ENCODE measurements at regions of chr5 and their contacts with region 1.

Region 1: DNA sequence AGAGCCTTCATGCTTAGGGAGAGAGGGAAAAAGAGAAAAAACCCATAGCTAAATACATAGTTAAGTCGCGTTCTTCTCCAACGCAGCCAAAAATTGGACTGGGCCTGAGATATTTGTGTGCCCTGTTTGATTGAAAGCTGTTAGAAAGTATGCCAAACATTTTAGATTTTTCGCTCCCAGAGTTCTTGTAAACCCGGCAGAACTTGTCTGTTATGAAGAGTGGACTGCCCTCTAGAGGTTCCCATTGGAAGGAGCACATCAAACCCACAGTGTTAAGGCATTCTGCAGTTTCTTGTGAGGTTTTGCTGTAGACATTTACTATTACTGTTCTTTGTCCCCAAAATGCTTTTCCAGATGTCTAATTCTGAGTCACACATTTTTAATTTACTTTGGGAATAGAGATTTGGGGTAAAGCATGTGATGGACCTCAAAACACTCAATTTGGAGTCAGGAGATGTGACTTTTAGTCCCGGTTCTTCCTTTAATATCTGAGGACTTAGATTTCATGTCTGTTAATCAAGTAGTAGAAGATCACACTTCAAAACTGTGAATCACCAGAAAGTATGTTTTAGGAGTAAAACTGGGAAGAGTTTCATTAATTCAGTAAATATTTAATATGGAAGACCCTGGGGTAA is 96.6 kb downstream of the PCSK1 start:
- DNase-seq: peak; percentile 84
- ATAC-seq: peak; percentile 90
- H3K4me3 ChIP-seq: peak overlapping the region in 1 of 3 experiments; percentile 28; a peak in 1 of 6 replicates
- H3K27ac ChIP-seq: peak overlapping the region; percentile 25
- H3K4me1 ChIP-seq: peaks cover 71% of the 10 kb centered on the region
- H3K27me3 ChIP-seq: no peaks in the 10 kb centered on the region
- CTCF ChIP-seq: peak; percentile 87
- EP300 ChIP-seq: peak in 1 of 2 experiments; percentile 50; a peak in 2 of 4 replicates
- POLR2A ChIP-seq: no peak
- RAD21 ChIP-seq: peak; percentile 85

Region 2: GRCh38 chr5:95646554-95647431 is 689.7 kb before region 1 on chr5 and contains the start of gene RFESD:
- CTCF ChIA-PET with region 1: no interaction called
- POLR2A ChIA-PET with region 1: no interaction called
- in situ Hi-C with region 1: loop called (anchors 25 kb)
- intact Hi-C with region 1: no loop called
- DNase-seq: peak; percentile 96
- ATAC-seq: peak; percentile 98
- H3K4me3 ChIP-seq: peak within 1 kb of the TSS; percentile 31 to 55 (median 39); a peak in 5 of 6 replicates
- H3K27ac ChIP-seq: peak within 1 kb of the TSS; percentile 90
- H3K4me1 ChIP-seq: peaks cover 55% of the 10 kb centered on the region
- H3K27me3 ChIP-seq: no peaks in the 10 kb centered on the region
- CTCF ChIP-seq: peak; percentile 56
- EP300 ChIP-seq: peak; percentile 18 to 53; a peak in 2 of 4 replicates
- POLR2A ChIP-seq: peak; percentile 65 to 85
- RAD21 ChIP-seq: peak; percentile 32; the same call in 1 of the 2 replicates
- total RNA-seq, gene RFESD: 1.2 and 2.2 TPM in 2 replicates

Region 3: GRCh38 chr5:95892780-95893354 is 443.6 kb before region 1 on chr5:
- CTCF ChIA-PET with region 1: interaction called, 3 read pairs
- POLR2A ChIA-PET with region 1: no interaction called
- in situ Hi-C with region 1: no loop called
- intact Hi-C with region 1: loop called (anchors 10 kb)
- DNase-seq: peak; percentile 48
- ATAC-seq: peak; percentile 76
- H3K4me3 ChIP-seq: no peak overlapping the region
- H3K27ac ChIP-seq: no peak overlapping the region
- H3K4me1 ChIP-seq: peaks cover 53% of the 10 kb centered on the region
- H3K27me3 ChIP-seq: no peaks in the 10 kb centered on the region
- CTCF ChIP-seq: peak; percentile 59
- EP300 ChIP-seq: no peak
- POLR2A ChIP-seq: no peak
- RAD21 ChIP-seq: peak; percentile 72

Region 4: GRCh38 chr5:96001262-96001661 is 335.2 kb before region 1 on chr5:
- CTCF ChIA-PET with region 1: no interaction called
- POLR2A ChIA-PET with region 1: no interaction called
- in situ Hi-C with region 1: no loop called
- intact Hi-C with region 1: loop called (anchors 1 kb)
- DNase-seq: peak; percentile 85
- ATAC-seq: peak; percentile 94
- H3K4me3 ChIP-seq: no peak overlapping the region
- H3K27ac ChIP-seq: peak overlapping the region; percentile 54
- H3K4me1 ChIP-seq: peaks cover 61% of the 10 kb centered on the region
- H3K27me3 ChIP-seq: no peaks in the 10 kb centered on the region
- CTCF ChIP-seq: no peak
- EP300 ChIP-seq: peak in 1 of 2 experiments; percentile 84; a peak in 2 of 4 replicates
- POLR2A ChIP-seq: no peak
- RAD21 ChIP-seq: no peak

Region 5: DNA sequence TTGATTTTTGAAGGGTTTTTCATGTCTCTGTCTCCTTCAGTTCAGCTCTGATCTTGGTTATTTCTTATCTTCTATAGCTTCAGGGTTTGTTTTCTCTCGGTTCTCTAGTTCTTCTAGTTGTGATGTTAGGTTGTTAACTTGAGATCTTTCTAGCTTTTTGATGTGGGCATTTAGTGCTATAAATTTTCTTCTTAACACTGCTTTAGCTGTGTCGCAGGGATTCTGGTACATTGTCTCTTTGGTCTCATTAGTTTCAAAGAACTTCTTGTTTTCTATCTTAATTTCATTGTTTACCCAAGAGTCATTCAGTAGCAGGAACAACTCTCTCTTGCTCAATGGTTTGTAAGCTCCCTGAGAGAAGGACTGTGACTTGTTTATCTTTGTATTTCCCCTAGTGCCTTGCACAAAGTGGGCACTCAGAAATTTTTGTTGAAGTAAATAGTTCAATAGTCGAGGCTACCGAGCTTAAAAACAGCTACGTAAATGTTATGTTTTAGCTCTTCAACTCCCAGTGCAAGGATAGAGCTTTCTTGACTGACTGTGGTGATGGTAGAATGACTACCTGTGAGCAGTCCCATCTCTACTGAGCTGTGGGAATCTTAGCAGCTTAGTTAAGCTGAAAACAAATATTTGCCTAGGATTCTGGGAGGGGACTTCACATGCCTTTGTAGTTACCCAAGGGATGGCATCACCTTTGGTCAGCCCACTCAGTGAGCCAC is 149.0 kb before region 1 on chr5:
- CTCF ChIA-PET with region 1: no interaction called
- POLR2A ChIA-PET with region 1: interaction called, 3 read pairs
- in situ Hi-C with region 1: no loop called
- intact Hi-C with region 1: loop called (anchors 5 kb)
- DNase-seq: peak; percentile 93
- ATAC-seq: peak; percentile 98
- H3K4me3 ChIP-seq: no peak overlapping the region; a peak in 1 of 6 replicates
- H3K27ac ChIP-seq: peak overlapping the region; percentile 61
- H3K4me1 ChIP-seq: peaks cover 47% of the 10 kb centered on the region
- H3K27me3 ChIP-seq: no peaks in the 10 kb centered on the region
- CTCF ChIP-seq: no peak
- EP300 ChIP-seq: peak; percentile 13 to 81; a peak in 2 of 4 replicates
- POLR2A ChIP-seq: no peak
- RAD21 ChIP-seq: no peak; the same call in 1 of the 2 replicates

Region 6: DNA sequence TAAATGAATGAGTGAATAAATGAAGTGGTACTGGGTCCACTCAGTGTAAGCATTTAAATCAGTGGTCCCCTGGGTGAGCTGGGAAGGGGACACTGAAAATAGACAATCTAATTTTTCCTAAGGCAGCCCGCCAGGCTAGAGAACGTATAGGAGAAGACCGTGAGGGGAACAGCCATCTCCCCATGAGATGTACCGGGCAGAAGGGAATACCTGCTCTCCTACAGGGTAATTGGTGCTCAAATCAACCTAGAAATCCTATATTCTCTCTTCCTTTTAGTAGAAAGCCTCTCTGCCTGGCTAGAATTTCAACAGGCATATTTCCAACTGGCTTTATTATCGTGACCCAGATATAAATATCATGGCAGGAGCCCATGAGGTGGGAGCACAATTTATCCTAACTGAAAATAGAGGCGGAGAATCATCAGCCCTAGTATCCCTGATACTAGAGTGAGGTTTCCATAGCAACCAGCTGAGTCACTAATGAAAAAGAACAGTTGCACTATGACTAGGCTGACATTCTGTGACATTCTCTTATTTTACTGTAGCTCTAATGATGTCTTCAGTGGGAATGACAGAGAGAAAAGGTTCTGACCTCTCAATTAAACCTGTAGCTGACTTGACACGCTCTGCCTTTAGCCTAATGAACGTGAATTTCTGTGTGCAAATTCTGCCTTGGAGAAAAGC is 229.3 kb after region 1 on chr5:
- CTCF ChIA-PET with region 1: no interaction called
- POLR2A ChIA-PET with region 1: no interaction called
- in situ Hi-C with region 1: no loop called
- intact Hi-C with region 1: no loop called
- DNase-seq: no peak
- ATAC-seq: no peak
- H3K4me3 ChIP-seq: no peak overlapping the region
- H3K27ac ChIP-seq: no peak overlapping the region
- H3K4me1 ChIP-seq: no peaks in the 10 kb centered on the region
- H3K27me3 ChIP-seq: no peaks in the 10 kb centered on the region; a peak in 2 of 5 replicates
- CTCF ChIP-seq: no peak
- EP300 ChIP-seq: no peak
- POLR2A ChIP-seq: no peak
- RAD21 ChIP-seq: no peak